CD8-positive, alpha-beta T cell (primary cell): ENCODE measurements at regions of chr17 and their contacts with region 1.

Region 1: DNA sequence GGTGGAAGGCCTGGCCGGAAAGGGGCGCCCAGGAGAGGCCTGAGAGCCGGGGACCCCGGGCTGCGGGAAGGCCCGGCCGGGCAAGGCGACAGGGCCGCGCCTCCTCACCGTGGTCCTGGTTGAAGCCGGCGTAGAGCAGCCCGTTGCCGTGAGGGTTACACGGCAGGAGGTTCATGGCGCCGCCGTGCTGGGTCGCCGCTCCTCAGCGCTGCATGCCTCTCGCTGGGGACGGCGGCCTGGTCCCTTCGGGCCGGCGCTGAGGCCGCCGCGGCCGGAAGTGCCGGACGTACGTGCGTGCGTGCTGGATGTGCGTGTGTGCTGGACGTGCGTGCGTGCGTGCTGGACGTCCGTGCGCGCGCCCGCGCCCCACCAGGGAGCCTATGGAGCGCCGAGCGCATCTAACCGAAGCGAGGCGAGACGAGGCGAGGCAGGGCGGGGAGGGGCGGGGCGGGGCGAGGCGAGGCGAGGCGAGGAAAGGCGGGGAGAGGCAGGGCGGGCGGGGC is at the start of gene WDR45B:
- DNase-seq: peak; percentile 76 to 96 (median 87)
- ATAC-seq: peak; percentile 83
- H3K4me3 ChIP-seq: peak within 1 kb of the TSS; percentile 61 to 96
- H3K4me3 Mint-ChIP-seq: peak within 1 kb of the TSS; percentile 89
- H3K27ac ChIP-seq: peak within 1 kb of the TSS; percentile 91 to 95
- H3K27ac Mint-ChIP-seq: peak within 1 kb of the TSS; percentile 91
- H3K4me1 ChIP-seq: peaks cover 21% of the 10 kb centered on the region
- H3K4me1 Mint-ChIP-seq: peaks cover 31% of the 10 kb centered on the region
- H3K27me3 ChIP-seq: no peaks in the 10 kb centered on the region
- H3K27me3 Mint-ChIP-seq: no peaks in the 10 kb centered on the region
- CTCF ChIP-seq: no peak
- total RNA-seq, gene WDR45B: 103 to 107 TPM

Region 2: DNA sequence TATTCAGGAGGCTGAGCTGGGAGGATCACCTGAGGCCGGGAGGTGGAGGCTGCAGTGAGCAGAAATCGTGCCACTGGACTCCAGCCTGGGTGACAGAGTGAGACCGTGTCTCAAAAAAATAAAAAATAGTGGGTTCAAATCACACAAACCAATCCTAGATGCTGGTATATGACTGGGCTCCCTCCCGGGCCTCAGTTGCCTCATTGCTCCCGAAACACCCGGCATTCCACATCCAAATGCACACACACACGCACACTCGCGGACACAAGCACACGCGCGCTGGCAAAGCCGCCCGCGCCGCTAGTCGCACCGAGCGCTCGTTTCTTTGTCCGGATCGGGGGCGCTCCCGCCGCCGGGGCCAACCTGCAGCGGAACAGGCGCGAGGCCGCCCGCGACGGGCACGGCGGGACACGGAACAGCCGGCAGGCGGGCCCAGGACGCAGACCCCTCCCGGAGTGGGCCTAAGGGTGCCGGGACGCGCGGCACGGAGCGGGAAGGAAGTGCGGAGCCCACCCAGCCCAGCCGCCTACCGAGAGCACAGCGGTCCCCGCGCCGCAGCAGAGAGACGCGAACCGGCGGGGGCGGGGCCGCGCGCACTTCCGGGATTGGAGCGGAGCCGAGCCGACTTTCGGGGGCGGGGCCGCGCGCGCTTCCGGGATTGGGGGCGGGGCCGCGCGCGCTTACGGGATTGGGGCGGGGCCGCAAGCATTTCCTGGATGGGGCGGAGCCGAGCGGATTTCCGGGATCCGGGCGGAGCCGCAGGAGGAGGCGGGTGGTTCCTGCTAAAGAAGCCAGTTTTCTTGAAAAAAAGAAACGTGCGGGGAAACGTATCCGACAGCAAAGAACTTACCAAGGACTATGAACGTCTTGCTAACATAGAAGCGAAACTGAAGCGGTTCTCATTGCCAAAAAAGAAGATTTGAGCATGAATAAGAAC is 197.8 kb before region 1 on chr17 and contains the start of gene CYBC1:
- CTCF ChIA-PET with region 1: no interaction called
- POLR2A ChIA-PET with region 1: no interaction called
- intact Hi-C with region 1: loop called in 1 of 2 experiments (anchors 1 kb)
- DNase-seq: peak; percentile 86 to 97 (median 95)
- ATAC-seq: peak; percentile 65
- H3K4me3 ChIP-seq: peak within 1 kb of the TSS; percentile 57 to 77
- H3K4me3 Mint-ChIP-seq: peak within 1 kb of the TSS; percentile 90
- H3K27ac ChIP-seq: peak within 1 kb of the TSS; percentile 87 to 94
- H3K27ac Mint-ChIP-seq: peak within 1 kb of the TSS; percentile 95
- H3K4me1 ChIP-seq: peaks cover 26% of the 10 kb centered on the region
- H3K4me1 Mint-ChIP-seq: peaks cover 40% of the 10 kb centered on the region
- H3K27me3 ChIP-seq: no peaks in the 10 kb centered on the region
- H3K27me3 Mint-ChIP-seq: no peaks in the 10 kb centered on the region
- CTCF ChIP-seq: no peak
- total RNA-seq, gene CYBC1: 52.9 to 63.9 TPM

Region 3: GRCh38 chr17:82592767-82593589 is 55.2 kb before region 1 on chr17:
- CTCF ChIA-PET with region 1: no interaction called
- POLR2A ChIA-PET with region 1: no interaction called
- intact Hi-C with region 1: loop called in 1 of 2 experiments (anchors 5 kb)
- DNase-seq: peak; percentile 28 to 86 (median 61)
- ATAC-seq: peak; percentile 41
- H3K4me3 ChIP-seq: peak overlapping the region; percentile 54 to 76
- H3K4me3 Mint-ChIP-seq: peak overlapping the region; percentile 74
- H3K27ac ChIP-seq: peak overlapping the region; percentile 52 to 80
- H3K27ac Mint-ChIP-seq: peak overlapping the region; percentile 89
- H3K4me1 ChIP-seq: peaks cover 37% of the 10 kb centered on the region
- H3K4me1 Mint-ChIP-seq: peaks cover 33% of the 10 kb centered on the region
- H3K27me3 ChIP-seq: no peaks in the 10 kb centered on the region
- H3K27me3 Mint-ChIP-seq: no peaks in the 10 kb centered on the region
- CTCF ChIP-seq: no peak

Region 4: DNA sequence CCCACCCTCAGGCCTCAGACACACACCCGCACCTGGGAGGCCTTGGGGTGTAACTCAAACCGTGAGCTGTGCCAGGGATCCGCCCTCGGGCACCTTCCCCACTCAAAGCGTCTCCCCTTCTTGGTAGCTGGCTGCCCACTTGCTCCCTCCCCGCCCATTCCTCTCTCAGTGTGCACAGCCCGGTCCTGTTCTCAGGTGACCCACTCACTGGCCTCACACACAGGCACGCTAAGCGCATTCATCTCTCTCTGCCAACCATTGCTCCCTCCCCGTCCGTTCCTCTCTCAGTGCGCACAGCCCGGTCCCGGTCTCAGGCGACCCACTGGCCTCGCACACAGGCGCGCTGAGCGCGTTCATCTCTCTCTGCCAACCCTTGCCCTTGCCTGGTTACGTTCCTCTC is 20.8 kb before region 1 on chr17:
- CTCF ChIA-PET with region 1: no interaction called
- POLR2A ChIA-PET with region 1: no interaction called
- intact Hi-C with region 1: no loop called
- DNase-seq: no peak
- ATAC-seq: no peak
- H3K4me3 ChIP-seq: no peak overlapping the region
- H3K4me3 Mint-ChIP-seq: no peak overlapping the region
- H3K27ac ChIP-seq: no peak overlapping the region
- H3K27ac Mint-ChIP-seq: no peak overlapping the region
- H3K4me1 ChIP-seq: no peaks in the 10 kb centered on the region
- H3K4me1 Mint-ChIP-seq: peaks cover 4% of the 10 kb centered on the region
- H3K27me3 ChIP-seq: no peaks in the 10 kb centered on the region
- H3K27me3 Mint-ChIP-seq: no peaks in the 10 kb centered on the region
- CTCF ChIP-seq: no peak

Region 5: DNA sequence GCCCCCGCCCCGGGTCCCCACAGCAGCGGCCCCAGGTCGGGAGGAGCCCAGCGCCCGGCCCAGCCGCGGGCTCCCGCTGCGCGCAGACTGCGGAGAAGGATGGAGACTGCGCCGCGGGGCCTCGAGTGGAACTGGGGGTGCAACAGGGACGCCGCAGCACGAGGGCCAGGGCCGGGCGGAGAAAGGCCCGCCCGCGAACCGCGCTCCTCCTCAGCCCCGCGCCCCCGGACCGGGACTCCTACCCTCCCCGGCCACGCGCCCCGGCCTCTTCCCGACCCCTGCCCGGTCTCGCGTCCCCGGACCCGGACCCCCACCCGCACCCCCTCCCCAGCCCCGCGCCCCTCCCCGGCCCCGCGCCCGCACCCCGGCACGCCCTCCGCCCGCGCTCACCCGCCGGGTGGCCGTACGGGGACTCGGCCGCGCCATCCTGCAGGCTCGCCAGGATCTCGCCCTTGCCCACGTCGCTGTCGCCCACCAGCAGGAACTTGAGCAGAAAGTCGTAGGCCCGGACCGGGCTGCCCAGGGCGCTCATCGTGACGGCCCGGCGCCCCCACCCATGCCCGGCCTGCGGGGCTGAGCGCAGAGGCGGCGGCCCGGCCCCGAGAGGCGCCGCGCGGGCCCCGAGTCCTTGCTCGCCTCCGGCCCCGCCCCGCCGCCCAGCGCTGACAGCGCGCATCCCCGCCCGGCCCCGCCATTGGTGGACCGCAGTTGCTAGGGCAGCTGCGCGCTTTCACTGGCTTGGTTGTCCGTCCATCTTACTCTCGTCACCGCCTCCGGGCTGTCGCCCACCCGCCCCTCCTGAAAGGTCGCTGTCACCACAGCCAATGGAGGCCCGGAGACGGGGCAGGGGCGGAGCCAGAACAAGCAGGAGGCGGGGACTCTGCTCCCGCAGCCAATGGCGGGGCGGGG is 50.1 kb after region 1 on chr17 and contains the start of gene RAB40B:
- CTCF ChIA-PET with region 1: no interaction called
- POLR2A ChIA-PET with region 1: no interaction called
- intact Hi-C with region 1: loop called in 1 of 2 experiments (anchors 1 kb)
- DNase-seq: peak; percentile 96 to 99 (median 99)
- ATAC-seq: peak; percentile 96
- H3K4me3 ChIP-seq: peak within 1 kb of the TSS; percentile 49 to 86
- H3K4me3 Mint-ChIP-seq: peak within 1 kb of the TSS; percentile 85
- H3K27ac ChIP-seq: peak within 1 kb of the TSS in 1 of 2 experiments; percentile 33
- H3K27ac Mint-ChIP-seq: peak within 1 kb of the TSS; percentile 62
- H3K4me1 ChIP-seq: peaks cover 17% of the 10 kb centered on the region
- H3K4me1 Mint-ChIP-seq: peaks cover 18% of the 10 kb centered on the region
- H3K27me3 ChIP-seq: peaks cover 0 to 2% of the 10 kb centered on the region in 2 experiments
- H3K27me3 Mint-ChIP-seq: peaks cover 2% of the 10 kb centered on the region
- CTCF ChIP-seq: no peak
- total RNA-seq, gene RAB40B: 1.1 to 1.2 TPM

Region 6: GRCh38 chr17:82716203-82717010 is 68.2 kb after region 1 on chr17 and contains the start of gene FN3KRP:
- CTCF ChIA-PET with region 1: no interaction called
- POLR2A ChIA-PET with region 1: no interaction called
- intact Hi-C with region 1: loop called (anchors 1 to 5 kb)
- DNase-seq: peak; percentile 68 to 98 (median 92)
- ATAC-seq: peak; percentile 92
- H3K4me3 ChIP-seq: peak within 1 kb of the TSS; percentile 67 to 75
- H3K4me3 Mint-ChIP-seq: peak within 1 kb of the TSS; percentile 98
- H3K27ac ChIP-seq: peak within 1 kb of the TSS; percentile 57 to 65
- H3K27ac Mint-ChIP-seq: peak within 1 kb of the TSS; percentile 93
- H3K4me1 ChIP-seq: peaks cover 18% of the 10 kb centered on the region
- H3K4me1 Mint-ChIP-seq: peaks cover 22% of the 10 kb centered on the region
- H3K27me3 ChIP-seq: no peaks in the 10 kb centered on the region
- H3K27me3 Mint-ChIP-seq: no peaks in the 10 kb centered on the region
- CTCF ChIP-seq: no peak
- total RNA-seq, gene FN3KRP: 29.3 to 30.9 TPM

Region 7: GRCh38 chr17:82751571-82752370 is 103.6 kb after region 1 on chr17 and contains the start of gene TBCD:
- CTCF ChIA-PET with region 1: no interaction called
- POLR2A ChIA-PET with region 1: no interaction called
- intact Hi-C with region 1: loop called in 1 of 2 experiments (anchors 1 kb)
- DNase-seq: peak; percentile 74 to 93 (median 84)
- ATAC-seq: peak; percentile 82
- H3K4me3 ChIP-seq: peak within 1 kb of the TSS; percentile 68 to 90
- H3K4me3 Mint-ChIP-seq: peak within 1 kb of the TSS; percentile 82
- H3K27ac ChIP-seq: peak within 1 kb of the TSS; percentile 25 to 61
- H3K27ac Mint-ChIP-seq: peak within 1 kb of the TSS; percentile 41
- H3K4me1 ChIP-seq: peaks cover 17% of the 10 kb centered on the region
- H3K4me1 Mint-ChIP-seq: peaks cover 28% of the 10 kb centered on the region
- H3K27me3 ChIP-seq: no peaks in the 10 kb centered on the region
- H3K27me3 Mint-ChIP-seq: no peaks in the 10 kb centered on the region
- CTCF ChIP-seq: no peak
- total RNA-seq, gene TBCD: 78.3 to 91.2 TPM

Region 8: GRCh38 chr17:83051395-83052233 is 403.4 kb after region 1 on chr17:
- CTCF ChIA-PET with region 1: no interaction called
- POLR2A ChIA-PET with region 1: no interaction called
- intact Hi-C with region 1: loop called (anchors 2 kb)
- DNase-seq: peak; percentile 95 to 99 (median 99)
- ATAC-seq: peak; percentile 85
- H3K4me3 ChIP-seq: peak overlapping the region; percentile 49 to 68
- H3K4me3 Mint-ChIP-seq: peak overlapping the region; percentile 86
- H3K27ac ChIP-seq: peak overlapping the region; percentile 75 to 87
- H3K27ac Mint-ChIP-seq: peak overlapping the region; percentile 94
- H3K4me1 ChIP-seq: peaks cover 40% of the 10 kb centered on the region
- H3K4me1 Mint-ChIP-seq: peaks cover 40% of the 10 kb centered on the region
- H3K27me3 ChIP-seq: no peaks in the 10 kb centered on the region
- H3K27me3 Mint-ChIP-seq: no peaks in the 10 kb centered on the region
- CTCF ChIP-seq: no peak